ENCODE measurements at regions of chr17 and their contacts with region 1.

Region 1: DNA sequence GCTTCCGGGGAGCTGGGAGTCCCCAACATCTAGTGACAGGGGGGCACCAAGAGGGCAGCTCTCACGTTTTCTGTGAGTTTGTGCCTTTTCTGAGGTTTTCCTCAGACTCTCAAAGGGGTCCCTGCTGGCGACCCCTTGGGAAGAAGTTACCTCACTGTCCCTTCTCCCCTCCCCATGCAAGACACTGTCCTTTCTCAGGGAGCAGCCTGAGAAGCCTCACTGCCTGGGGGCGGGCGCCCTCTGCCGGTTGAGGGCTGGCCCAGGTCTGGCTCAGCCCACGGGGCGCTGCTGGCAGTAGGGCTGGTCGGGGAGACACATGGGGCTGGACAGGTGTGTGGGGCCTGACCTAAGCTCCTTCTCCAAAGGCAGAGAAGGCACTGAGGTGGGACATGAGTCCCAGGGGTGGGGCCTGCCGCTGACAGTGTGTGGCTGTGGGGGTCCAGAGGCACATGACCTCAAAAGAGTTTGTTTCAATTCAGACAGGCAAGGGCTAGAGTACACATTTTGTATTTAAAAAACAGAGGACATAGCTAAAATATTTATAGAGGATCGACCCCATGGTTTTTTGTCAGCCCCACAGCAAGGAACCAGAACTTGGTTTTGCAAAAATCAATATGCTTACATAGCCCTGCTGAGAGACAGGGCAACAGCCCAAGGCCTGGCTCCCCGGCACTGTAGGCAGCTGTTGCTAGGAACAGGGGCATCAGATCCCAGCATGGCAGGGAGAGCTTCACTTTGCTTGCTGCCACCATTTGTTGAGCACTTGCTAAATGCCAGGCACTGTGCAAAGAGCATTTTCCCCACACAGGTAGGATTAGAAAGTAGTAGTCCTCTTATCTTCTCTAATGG is 18.5 kb upstream of the ALDH3A1 start:
- DNase-seq: no peak
- H3K4me3 ChIP-seq: no peak overlapping the region
- CTCF ChIP-seq: peak; percentile 100

Region 2: GRCh38 chr17:19513897-19514488 is 252.7 kb before region 1 on chr17:
- CTCF ChIA-PET with region 1: interaction called, 315 read pairs
- POLR2A ChIA-PET with region 1: no interaction called
- DNase-seq: no peak
- H3K4me3 ChIP-seq: no peak overlapping the region
- CTCF ChIP-seq: peak; percentile 84

Region 3: DNA sequence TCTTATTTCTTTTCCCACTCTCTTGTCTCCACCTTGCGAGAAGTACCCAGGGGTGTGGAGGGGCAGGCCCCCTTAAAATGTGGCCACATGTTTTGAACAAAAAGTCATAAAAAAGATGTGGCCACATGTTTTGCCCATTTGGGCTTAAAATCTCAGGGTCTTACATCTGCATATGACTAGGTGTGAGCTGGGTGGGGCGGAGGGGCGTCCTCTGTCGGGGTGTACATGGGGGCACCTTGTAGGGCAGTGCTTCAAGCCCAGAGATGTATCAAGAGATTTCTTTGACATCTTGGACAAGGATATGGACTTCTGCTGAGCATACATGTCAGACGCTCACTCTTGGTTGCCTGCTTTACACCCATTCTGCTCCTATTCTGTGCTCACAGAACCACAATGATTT is 246.0 kb before region 1 on chr17:
- CTCF ChIA-PET with region 1: interaction called, 165 read pairs
- POLR2A ChIA-PET with region 1: no interaction called
- DNase-seq: no peak
- H3K4me3 ChIP-seq: no peak overlapping the region
- CTCF ChIP-seq: no peak

Region 4: GRCh38 chr17:19533718-19534561 is 232.7 kb before region 1 on chr17 and contains the start of gene SLC47A1:
- CTCF ChIA-PET with region 1: interaction called, 14 read pairs
- POLR2A ChIA-PET with region 1: no interaction called
- DNase-seq: no peak
- H3K4me3 ChIP-seq: peak within 1 kb of the TSS; percentile 40
- CTCF ChIP-seq: no peak

Region 5: DNA sequence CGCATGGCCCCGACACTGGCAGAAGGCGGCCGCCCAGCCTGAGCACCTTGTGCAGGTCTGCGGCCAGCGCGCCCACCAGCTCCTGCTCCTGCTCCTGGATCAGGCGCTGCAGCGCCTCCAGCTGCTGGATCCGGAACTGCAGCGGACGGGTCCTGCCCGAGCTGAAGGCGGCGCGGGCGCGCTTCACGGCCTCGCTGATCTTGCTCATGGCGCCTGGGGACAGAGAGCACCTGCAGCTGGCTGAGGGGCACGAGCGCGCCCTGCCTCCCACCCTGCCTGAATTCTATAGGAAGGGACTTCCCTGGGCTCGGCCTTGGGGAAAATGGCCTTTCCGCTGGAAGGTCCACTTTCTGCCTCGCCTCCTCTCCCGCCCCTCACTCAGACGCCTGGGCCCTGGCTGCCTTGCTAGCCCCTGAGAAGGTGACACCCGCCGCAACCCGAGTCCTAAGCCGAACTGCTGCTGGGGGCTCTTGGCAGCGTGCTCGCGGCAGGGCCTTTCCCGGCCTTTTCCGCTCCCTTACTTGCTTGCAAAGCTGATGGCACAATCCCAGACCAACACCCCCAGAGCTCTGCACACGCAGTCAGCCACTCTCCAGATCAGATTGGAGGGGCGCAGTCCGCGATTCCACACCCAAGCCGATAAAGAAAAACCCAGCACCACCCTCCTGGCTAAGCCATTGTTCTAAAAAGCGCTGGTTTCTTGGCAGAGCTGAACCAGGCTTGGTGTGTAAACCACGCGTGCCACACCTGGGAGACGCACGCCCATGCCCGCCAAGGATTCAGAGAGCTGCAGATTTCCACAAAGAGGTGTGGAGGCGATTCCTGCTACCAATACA is 21.5 kb before region 1 on chr17:
- CTCF ChIA-PET with region 1: interaction called, 217 read pairs
- POLR2A ChIA-PET with region 1: no interaction called
- DNase-seq: no peak
- H3K4me3 ChIP-seq: peak overlapping the region; percentile 18; the same call in 1 of the 2 replicates
- CTCF ChIP-seq: peak; percentile 93

Region 6: DNA sequence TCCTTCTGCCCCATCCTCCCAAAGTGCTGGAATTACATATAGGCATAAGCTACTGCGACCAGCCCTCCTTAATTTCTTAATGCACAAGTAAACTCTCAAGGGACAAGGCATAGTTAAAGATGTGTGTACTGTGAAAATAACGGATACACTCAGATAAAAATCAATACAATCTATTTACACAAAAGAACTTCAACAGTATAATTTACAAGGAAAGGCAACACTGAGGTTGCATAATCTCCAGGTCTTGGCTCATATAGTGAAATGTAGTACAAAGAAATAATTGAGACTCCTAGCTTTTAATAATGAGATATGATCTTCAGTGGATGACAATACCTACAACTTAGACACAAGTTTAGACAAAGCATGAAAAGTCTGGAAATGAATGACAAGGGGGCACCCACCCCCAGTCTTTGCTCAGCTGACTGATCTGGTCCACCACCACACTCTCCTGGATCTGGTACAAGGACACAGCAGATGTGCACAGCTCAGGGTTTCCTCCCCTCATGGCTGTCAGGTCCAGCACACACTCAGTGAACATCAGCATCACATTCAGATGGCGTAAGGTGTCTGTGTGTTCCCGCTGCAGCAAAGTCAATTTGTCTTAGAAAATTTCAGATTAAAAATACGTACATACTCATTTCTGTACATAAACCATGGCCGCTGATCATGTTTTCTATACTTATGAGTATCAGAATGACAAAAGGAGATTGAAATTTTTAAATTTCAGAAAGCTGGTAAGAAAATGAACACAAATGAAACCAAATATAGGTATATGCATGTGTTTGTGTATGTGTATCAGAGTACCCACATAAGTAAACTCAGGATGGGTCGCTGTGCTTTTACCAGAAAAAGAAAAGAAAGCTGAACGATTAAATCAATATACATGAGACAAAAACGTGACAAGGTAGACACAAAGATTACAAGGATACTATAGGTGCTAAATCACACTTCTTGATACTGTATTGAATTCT is 15.1 kb after region 1 on chr17:
- CTCF ChIA-PET with region 1: interaction called, 117 read pairs
- POLR2A ChIA-PET with region 1: no interaction called
- DNase-seq: no peak
- H3K4me3 ChIP-seq: no peak overlapping the region
- CTCF ChIP-seq: no peak

Measured in AG04449 (cell line).